ENCODE measurements at regions of chr2 and their contacts with region 1.

Region 1: GRCh38 chr2:45650851-45651414 is 542 bp upstream of the PRKCE start:
- DNase-seq: peak; percentile 95
- ATAC-seq: peak; percentile 74
- H3K4me3 ChIP-seq: peak overlapping the region; percentile 100
- H3K27ac ChIP-seq: peak overlapping the region; percentile 47
- H3K4me1 ChIP-seq: peaks cover 18% of the 10 kb centered on the region
- H3K27me3 ChIP-seq: no peaks in the 10 kb centered on the region
- CTCF ChIP-seq: peak; percentile 54

Region 2: DNA sequence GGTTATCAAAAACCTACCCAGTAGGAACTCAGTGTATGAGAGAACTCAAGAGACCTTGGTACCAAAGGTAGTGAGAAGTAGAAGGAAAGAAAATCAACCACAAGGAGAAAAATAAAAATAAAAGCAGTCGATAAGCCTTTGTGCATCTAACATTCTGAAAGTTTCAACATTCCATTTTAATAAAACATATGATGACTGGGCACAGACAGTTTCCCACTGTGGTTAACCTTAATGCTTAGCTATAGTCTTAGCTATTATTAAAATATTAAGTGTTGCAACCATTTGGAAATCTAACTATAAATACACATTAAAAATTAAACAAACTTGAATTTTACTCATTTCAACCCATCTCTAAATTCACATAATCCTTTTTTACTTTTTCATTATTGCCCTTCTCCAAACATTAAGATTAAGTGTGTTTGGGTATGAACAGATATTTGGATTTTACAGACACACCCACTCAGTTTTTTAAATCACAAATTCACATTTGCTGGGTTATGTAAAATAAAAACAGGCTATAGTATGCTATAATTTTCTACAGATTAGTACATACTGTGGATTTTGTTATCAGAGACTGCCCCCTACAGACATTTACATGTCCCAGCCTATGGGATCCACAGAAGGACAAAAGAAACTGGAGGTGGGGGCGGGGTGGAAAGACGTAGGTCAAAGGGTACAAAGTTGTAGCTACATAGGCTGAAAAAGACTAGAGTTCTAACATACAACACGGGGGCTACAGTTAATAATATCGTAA is 72.7 kb before region 1 on chr2:
- CTCF ChIA-PET with region 1: no interaction called
- POLR2A ChIA-PET with region 1: no interaction called
- intact Hi-C with region 1: no loop called
- DNase-seq: peak; percentile 43
- ATAC-seq: peak; percentile 73
- H3K4me3 ChIP-seq: no peak overlapping the region
- H3K27ac ChIP-seq: no peak overlapping the region
- H3K4me1 ChIP-seq: no peaks in the 10 kb centered on the region
- H3K27me3 ChIP-seq: no peaks in the 10 kb centered on the region
- CTCF ChIP-seq: peak; percentile 65

Region 3: GRCh38 chr2:45595721-45596435 is 55.1 kb before region 1 on chr2:
- CTCF ChIA-PET with region 1: no interaction called
- POLR2A ChIA-PET with region 1: no interaction called
- intact Hi-C with region 1: no loop called
- DNase-seq: peak; percentile 90
- ATAC-seq: peak; percentile 92
- H3K4me3 ChIP-seq: peak overlapping the region; percentile 18; the same call in 1 of the 2 replicates
- H3K27ac ChIP-seq: peak overlapping the region; percentile 45
- H3K4me1 ChIP-seq: peaks cover 21% of the 10 kb centered on the region
- H3K27me3 ChIP-seq: no peaks in the 10 kb centered on the region
- CTCF ChIP-seq: no peak

Region 4: GRCh38 chr2:45688479-45689200 is 37.7 kb after region 1 on chr2:
- CTCF ChIA-PET with region 1: no interaction called
- POLR2A ChIA-PET with region 1: no interaction called
- intact Hi-C with region 1: loop called (anchors 5 kb)
- DNase-seq: no peak
- ATAC-seq: peak; percentile 86
- H3K4me3 ChIP-seq: no peak overlapping the region
- H3K27ac ChIP-seq: no peak overlapping the region
- H3K4me1 ChIP-seq: no peaks in the 10 kb centered on the region
- H3K27me3 ChIP-seq: no peaks in the 10 kb centered on the region
- CTCF ChIP-seq: no peak

Region 5: GRCh38 chr2:45712570-45712969 is 61.6 kb after region 1 on chr2:
- CTCF ChIA-PET with region 1: interaction called, 12 read pairs
- POLR2A ChIA-PET with region 1: no interaction called
- intact Hi-C with region 1: no loop called
- DNase-seq: peak; percentile 38
- ATAC-seq: peak; percentile 58
- H3K4me3 ChIP-seq: no peak overlapping the region
- H3K27ac ChIP-seq: no peak overlapping the region
- H3K4me1 ChIP-seq: peaks cover 15% of the 10 kb centered on the region
- H3K27me3 ChIP-seq: no peaks in the 10 kb centered on the region
- CTCF ChIP-seq: peak; percentile 32; the same call in 1 of the 2 replicates

Region 6: DNA sequence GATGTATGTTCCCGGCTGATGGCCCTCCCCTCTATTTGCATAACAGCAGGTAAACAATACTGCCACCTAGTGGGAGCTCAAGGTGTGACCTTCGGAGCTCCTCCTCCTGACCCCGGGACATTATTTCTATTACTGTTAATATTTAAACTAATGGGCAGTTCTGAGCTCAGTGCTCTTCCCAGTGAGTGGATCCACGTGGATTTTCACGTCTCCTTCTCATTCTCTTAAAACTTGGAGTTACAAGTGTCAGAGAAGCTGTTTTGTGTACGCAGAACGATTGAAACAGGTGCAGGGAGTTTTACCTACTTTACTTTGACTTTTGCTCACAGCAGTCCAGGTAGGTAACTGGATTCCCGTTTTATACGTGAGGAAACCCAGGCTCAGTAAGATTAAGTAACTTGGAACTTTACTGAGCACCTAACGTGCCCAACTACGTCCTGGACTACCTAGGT is 127.8 kb after region 1 on chr2:
- CTCF ChIA-PET with region 1: interaction called, 11 read pairs
- POLR2A ChIA-PET with region 1: interaction called, 3 read pairs
- intact Hi-C with region 1: no loop called
- DNase-seq: peak; percentile 89
- ATAC-seq: peak; percentile 92
- H3K4me3 ChIP-seq: no peak overlapping the region
- H3K27ac ChIP-seq: no peak overlapping the region
- H3K4me1 ChIP-seq: no peaks in the 10 kb centered on the region
- H3K27me3 ChIP-seq: no peaks in the 10 kb centered on the region
- CTCF ChIP-seq: peak; percentile 83

Region 7: GRCh38 chr2:45813003-45813941 is 162.3 kb after region 1 on chr2:
- CTCF ChIA-PET with region 1: no interaction called
- POLR2A ChIA-PET with region 1: no interaction called
- intact Hi-C with region 1: no loop called
- DNase-seq: no peak
- ATAC-seq: no peak
- H3K4me3 ChIP-seq: no peak overlapping the region
- H3K27ac ChIP-seq: no peak overlapping the region
- H3K4me1 ChIP-seq: peaks cover 16% of the 10 kb centered on the region
- H3K27me3 ChIP-seq: no peaks in the 10 kb centered on the region
- CTCF ChIP-seq: no peak

Region 8: GRCh38 chr2:45886171-45886663 is 235.3 kb after region 1 on chr2:
- CTCF ChIA-PET with region 1: no interaction called
- POLR2A ChIA-PET with region 1: no interaction called
- intact Hi-C with region 1: loop called (anchors 1 kb)
- DNase-seq: no peak
- ATAC-seq: no peak
- H3K4me3 ChIP-seq: no peak overlapping the region
- H3K27ac ChIP-seq: no peak overlapping the region
- H3K4me1 ChIP-seq: peaks cover 6% of the 10 kb centered on the region
- H3K27me3 ChIP-seq: no peaks in the 10 kb centered on the region
- CTCF ChIP-seq: no peak